Activated CD4-positive, alpha-beta memory T cell treated with anti-CD3 and anti-CD28 coated beads for 36 hours (primary cell): ENCODE measurements at regions of chr9 and their contacts with region 1.

Region 1: DNA sequence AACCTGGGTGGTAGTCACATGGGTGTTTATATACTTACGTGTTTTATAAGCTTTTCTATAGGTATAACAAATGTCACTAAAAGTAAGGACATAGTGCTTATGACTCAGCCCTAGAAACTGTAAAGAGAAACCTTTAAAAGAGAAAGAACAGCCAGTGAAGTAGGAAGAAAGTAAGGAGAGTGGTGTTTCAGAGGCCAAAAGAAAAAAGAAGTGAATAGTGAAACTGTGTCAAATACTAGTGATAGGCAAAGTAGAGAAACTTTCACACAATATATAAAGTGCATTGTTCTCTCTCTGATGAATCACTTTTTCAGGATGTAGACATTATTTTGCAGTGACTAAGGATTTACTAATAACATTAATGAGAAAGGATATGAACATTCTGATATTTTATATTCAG is 74.2 kb upstream of the SUSD1 start:
- DNase-seq: no peak
- H3K4me3 Mint-ChIP-seq: no peak overlapping the region
- H3K27ac Mint-ChIP-seq: no peak overlapping the region
- H3K4me1 Mint-ChIP-seq: peaks cover 35% of the 10 kb centered on the region
- H3K27me3 Mint-ChIP-seq: no peaks in the 10 kb centered on the region

Region 2: DNA sequence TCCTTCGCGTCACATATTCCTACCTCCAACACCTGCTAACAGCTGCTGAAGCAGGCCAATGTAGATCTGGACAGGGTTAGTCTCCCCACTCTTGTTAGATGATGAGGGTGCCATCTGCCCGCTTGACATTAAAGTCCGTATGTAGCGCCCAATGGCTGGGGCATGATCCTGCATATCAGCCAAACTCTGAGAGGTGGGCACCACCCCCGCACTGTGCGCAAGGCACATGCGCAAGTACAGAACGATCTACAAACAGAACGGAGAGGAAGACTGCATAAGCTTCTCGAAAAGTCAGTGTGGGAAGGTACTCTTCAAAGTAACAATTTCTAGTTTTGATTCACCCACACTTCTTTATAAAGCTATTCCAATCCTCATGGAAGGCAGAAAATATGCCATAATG is 834.9 kb before region 1 on chr9:
- CTCF ChIA-PET with region 1: no interaction called
- POLR2A ChIA-PET with region 1: no interaction called
- intact Hi-C with region 1: no loop called
- DNase-seq: no peak
- H3K4me3 Mint-ChIP-seq: no peak overlapping the region
- H3K27ac Mint-ChIP-seq: no peak overlapping the region
- H3K4me1 Mint-ChIP-seq: no peaks in the 10 kb centered on the region
- H3K27me3 Mint-ChIP-seq: no peaks in the 10 kb centered on the region

Region 3: DNA sequence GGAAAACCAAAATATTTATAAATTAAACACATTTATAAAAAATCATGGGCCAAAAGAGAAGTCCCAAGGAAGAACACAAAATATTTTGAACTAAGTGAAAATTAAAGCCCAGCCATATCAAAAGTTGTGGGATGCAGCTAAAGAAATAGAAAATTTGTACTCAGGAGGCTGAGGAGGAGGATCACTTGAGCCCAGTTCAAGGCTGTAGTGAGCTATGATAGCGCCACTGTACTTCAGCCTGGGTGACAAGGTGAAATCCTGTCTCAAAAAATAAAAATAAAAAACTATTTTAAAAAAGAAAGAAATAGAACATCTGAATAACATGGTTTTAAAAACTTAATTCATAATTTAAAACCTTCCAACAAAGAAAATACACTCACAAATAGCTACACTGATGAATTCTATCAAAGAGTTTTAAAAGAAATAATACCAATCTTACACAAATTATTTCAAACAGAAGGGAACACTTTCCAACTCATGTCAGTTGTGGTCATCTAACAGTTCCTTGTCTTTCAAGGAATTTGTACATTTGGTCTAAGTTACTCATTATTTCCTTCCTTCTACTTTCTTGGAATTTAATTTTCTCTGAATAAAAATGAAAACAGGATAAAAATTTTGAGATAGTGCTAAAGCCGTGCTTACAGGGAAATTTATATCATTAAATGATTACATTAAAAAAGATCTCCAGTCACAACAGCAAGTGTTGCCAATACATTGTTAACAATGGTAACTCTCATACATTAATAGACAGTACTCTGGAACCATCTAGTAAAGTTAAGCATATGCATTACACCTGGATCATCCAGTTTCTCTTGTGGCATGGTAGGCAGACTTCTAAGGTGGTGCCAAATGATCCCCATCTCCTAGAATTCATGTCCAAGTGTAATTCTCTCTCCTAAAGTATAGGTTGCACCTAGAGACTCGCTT is 66.3 kb after region 1 on chr9:
- CTCF ChIA-PET with region 1: no interaction called
- POLR2A ChIA-PET with region 1: no interaction called
- intact Hi-C with region 1: loop called (anchors 2 kb)
- DNase-seq: no peak
- H3K4me3 Mint-ChIP-seq: no peak overlapping the region
- H3K27ac Mint-ChIP-seq: peak overlapping the region; percentile 58
- H3K4me1 Mint-ChIP-seq: peaks cover 63% of the 10 kb centered on the region
- H3K27me3 Mint-ChIP-seq: no peaks in the 10 kb centered on the region